ENCODE measurements at regions of chr22 and their contacts with region 1.

Region 1: GRCh38 chr22:50498322-50498890 is 9.1 kb downstream of the LMF2 start:
- DNase-seq: peak; percentile 78
- ATAC-seq: peak; percentile 96
- H3K4me3 Mint-ChIP-seq: no peak overlapping the region
- H3K27ac Mint-ChIP-seq: no peak overlapping the region
- H3K4me1 Mint-ChIP-seq: peaks cover 7% of the 10 kb centered on the region
- H3K27me3 Mint-ChIP-seq: no peaks in the 10 kb centered on the region

Region 2: GRCh38 chr22:50276143-50276542 is 222.3 kb before region 1 on chr22:
- CTCF ChIA-PET with region 1: no interaction called
- POLR2A ChIA-PET with region 1: no interaction called
- intact Hi-C with region 1: loop called in 1 of 2 experiments (anchors 2 kb)
- DNase-seq: peak; percentile 81
- ATAC-seq: peak; percentile 70
- H3K4me3 Mint-ChIP-seq: no peak overlapping the region
- H3K27ac Mint-ChIP-seq: no peak overlapping the region
- H3K4me1 Mint-ChIP-seq: peaks cover 1% of the 10 kb centered on the region
- H3K27me3 Mint-ChIP-seq: peaks cover 2% of the 10 kb centered on the region

Region 3: DNA sequence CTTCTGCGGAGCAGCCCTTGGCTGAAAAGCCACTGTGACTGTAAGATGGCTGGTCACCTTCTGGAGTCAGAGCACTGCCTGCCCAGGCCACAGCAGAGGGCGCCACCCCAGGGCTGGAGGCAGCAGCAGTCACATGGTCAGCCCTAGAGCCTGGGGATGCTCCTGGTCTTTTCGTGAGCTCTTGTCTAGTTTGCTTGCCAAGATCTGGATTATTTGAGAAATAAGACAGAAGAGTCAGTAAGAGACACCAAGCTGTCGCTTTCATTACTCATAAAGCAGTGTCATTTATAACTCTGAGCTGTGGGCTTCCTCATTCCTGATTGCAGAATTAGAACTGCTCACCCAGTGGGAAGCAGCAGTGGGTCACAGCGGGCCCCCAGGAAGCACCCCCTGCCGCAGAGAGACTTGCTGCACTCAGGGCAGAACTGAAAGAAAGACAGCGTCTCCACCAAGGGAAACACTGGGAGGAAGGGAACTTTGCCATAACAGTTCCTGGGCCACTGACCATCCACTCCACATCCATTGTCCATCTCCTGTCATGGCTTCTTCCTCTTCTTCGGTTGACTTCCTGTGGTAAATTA is 98.6 kb before region 1 on chr22:
- CTCF ChIA-PET with region 1: interaction called, 10 read pairs
- POLR2A ChIA-PET with region 1: no interaction called
- intact Hi-C with region 1: loop called in 1 of 2 experiments (anchors 1 kb)
- DNase-seq: peak; percentile 69
- ATAC-seq: peak; percentile 87
- H3K4me3 Mint-ChIP-seq: no peak overlapping the region
- H3K27ac Mint-ChIP-seq: peak overlapping the region; percentile 66
- H3K4me1 Mint-ChIP-seq: peaks cover 11% of the 10 kb centered on the region
- H3K27me3 Mint-ChIP-seq: no peaks in the 10 kb centered on the region

Region 4: GRCh38 chr22:50456466-50457234 is 41.8 kb before region 1 on chr22:
- CTCF ChIA-PET with region 1: interaction called, 3 read pairs
- POLR2A ChIA-PET with region 1: no interaction called
- intact Hi-C with region 1: loop called (anchors 5 to 10 kb)
- DNase-seq: peak; percentile 52
- ATAC-seq: peak; percentile 57
- H3K4me3 Mint-ChIP-seq: no peak overlapping the region
- H3K27ac Mint-ChIP-seq: no peak overlapping the region
- H3K4me1 Mint-ChIP-seq: peaks cover 11% of the 10 kb centered on the region
- H3K27me3 Mint-ChIP-seq: no peaks in the 10 kb centered on the region